ENCODE measurements at regions of chr10 and their contacts with region 1.

Region 1: GRCh38 chr10:12782537-12782936 is 219.0 kb downstream of the CCDC3 start:
- DNase-seq: peak; percentile 61 to 66
- ATAC-seq: peak; percentile 55 to 76; a peak in 4 of 6 replicates
- H3K4me3 ChIP-seq: no peak overlapping the region
- H3K27ac ChIP-seq: no peak overlapping the region
- H3K4me1 ChIP-seq: no peaks in the 10 kb centered on the region
- CTCF ChIP-seq: peak; percentile 60
- EP300 ChIP-seq: no peak
- POLR2A ChIP-seq: no peak
- RAD21 ChIP-seq: peak; percentile 39 to 47; a peak in 4 of 5 replicates

Region 2: GRCh38 chr10:12768156-12769100 is 14.1 kb before region 1 on chr10:
- CTCF ChIA-PET with region 1: interaction called, 17 read pairs
- POLR2A ChIA-PET with region 1: no interaction called
- DNase-seq: no peak
- ATAC-seq: no peak
- H3K4me3 ChIP-seq: no peak overlapping the region
- H3K27ac ChIP-seq: no peak overlapping the region
- H3K4me1 ChIP-seq: no peaks in the 10 kb centered on the region
- CTCF ChIP-seq: no peak
- EP300 ChIP-seq: no peak
- POLR2A ChIP-seq: no peak
- RAD21 ChIP-seq: no peak

Region 3: DNA sequence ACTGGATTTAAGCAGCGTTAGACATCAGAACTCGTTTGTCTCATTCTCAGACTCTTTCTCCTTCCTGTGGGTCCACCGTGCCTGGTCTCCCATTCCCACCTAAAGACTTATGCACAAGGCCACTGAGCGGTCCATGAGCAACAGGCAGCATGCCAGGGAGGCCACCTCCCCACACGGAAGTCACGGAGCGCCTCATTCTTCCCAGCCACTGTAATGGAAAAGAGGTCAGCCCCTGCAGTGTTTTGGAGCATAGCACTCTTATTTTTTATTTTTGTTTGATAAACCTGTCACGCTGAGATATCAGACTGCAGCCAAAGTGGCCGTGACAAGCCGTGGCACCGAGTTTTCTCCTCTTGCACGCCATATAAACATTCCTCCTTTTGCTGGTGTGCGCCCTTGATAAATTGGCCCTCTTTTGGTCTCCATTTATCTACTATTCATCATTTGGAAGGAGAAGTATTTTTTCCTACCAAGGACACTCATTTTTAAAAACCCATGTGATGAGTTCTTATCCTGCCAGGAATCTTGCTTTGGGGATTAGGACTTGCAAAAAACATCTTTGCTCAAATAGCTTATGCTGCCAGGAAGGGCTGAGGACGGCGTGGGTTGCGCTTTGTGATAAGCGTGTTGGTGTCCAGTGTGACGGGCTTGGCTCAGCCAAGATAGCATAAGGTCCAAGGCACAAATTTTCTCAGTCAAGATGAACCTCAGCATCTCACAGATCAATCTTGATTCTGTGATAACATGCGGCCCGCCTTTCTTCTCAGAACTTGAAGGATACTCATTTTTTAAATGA is 13.0 kb after region 1 on chr10:
- CTCF ChIA-PET with region 1: interaction called, 12 read pairs
- POLR2A ChIA-PET with region 1: no interaction called
- DNase-seq: no peak
- ATAC-seq: no peak
- H3K4me3 ChIP-seq: no peak overlapping the region
- H3K27ac ChIP-seq: no peak overlapping the region
- H3K4me1 ChIP-seq: no peaks in the 10 kb centered on the region
- CTCF ChIP-seq: no peak
- EP300 ChIP-seq: no peak
- POLR2A ChIP-seq: no peak
- RAD21 ChIP-seq: no peak